Right cardiac atrium (tissue), 5 donors: ENCODE measurements at regions of chr6 and their contacts with region 1.

Region 1: GRCh38 chr6:26175428-26176181 is 88.4 kb downstream of the HFE start:
- DNase-seq: no peak
- ATAC-seq: no peak
- H3K4me3 ChIP-seq: no peak overlapping the region
- H3K27ac ChIP-seq: no peak overlapping the region
- H3K4me1 ChIP-seq: no peaks in the 10 kb centered on the region
- H3K27me3 ChIP-seq: no peaks in the 10 kb centered on the region

Region 2: GRCh38 chr6:26581164-26581915 is 405.7 kb after region 1 on chr6:
- intact Hi-C with region 1: loop called in 1 of 4 experiments (anchors 10 kb)
- DNase-seq: no peak
- ATAC-seq: no peak
- H3K4me3 ChIP-seq: no peak overlapping the region
- H3K27ac ChIP-seq: no peak overlapping the region
- H3K4me1 ChIP-seq: no peaks in the 10 kb centered on the region
- H3K27me3 ChIP-seq: no peaks in the 10 kb centered on the region